HEK293 (cell line): ENCODE measurements at regions of chrX and their contacts with region 1.

Region 1: GRCh38 chrX:72126539-72127140 is 5.1 kb downstream of the RTL5 start:
- H3K4me3 ChIP-seq: no peak overlapping the region
- H3K27ac ChIP-seq: no peak overlapping the region
- H3K4me1 ChIP-seq: peaks cover 6% of the 10 kb centered on the region; the same call in 1 of the 2 replicates
- CTCF ChIP-seq: peak; percentile 96

Region 2: DNA sequence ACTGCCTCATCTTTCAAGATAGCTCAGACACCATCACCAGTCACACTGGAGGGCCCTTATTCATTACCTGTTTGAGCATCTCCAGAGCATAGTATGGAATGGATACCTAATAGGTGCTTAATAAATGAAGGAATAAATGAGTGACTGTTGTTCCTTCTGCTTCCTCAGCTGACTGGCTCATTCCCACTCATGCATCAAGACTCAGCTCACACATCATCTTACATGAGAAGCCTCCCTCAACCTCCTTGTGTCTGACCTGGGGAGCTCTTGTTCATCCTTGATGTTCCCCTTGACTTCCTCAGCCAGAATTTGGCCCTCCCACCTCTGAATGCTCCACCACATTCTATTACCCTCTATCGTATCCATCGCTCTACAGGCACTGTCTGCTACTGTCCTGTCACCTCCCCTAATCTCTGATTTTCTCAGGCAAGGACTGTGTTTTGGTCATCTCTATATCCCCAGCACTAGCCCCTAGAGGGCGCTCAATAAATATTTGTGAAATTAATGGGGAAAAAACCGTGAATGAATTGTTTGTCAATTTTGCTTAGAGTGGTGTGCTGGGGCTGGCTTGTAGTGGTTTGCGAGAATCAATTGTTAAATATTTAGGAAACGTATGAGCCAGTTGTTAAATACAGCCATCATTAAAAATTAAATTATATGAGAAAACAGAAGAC is 127.7 kb before region 1 on chrX:
- CTCF ChIA-PET with region 1: interaction called, 74 read pairs
- POLR2A ChIA-PET with region 1: interaction called, 3 read pairs
- H3K4me3 ChIP-seq: no peak overlapping the region
- H3K27ac ChIP-seq: no peak overlapping the region
- H3K4me1 ChIP-seq: no peaks in the 10 kb centered on the region
- CTCF ChIP-seq: no peak

Region 3: GRCh38 chrX:72029483-72030411 is 96.9 kb before region 1 on chrX:
- CTCF ChIA-PET with region 1: interaction called, 16 read pairs
- POLR2A ChIA-PET with region 1: no interaction called
- H3K4me3 ChIP-seq: no peak overlapping the region
- H3K27ac ChIP-seq: no peak overlapping the region
- H3K4me1 ChIP-seq: no peaks in the 10 kb centered on the region
- CTCF ChIP-seq: no peak

Region 4: GRCh38 chrX:72107320-72107719 is 19.3 kb before region 1 on chrX:
- CTCF ChIA-PET with region 1: interaction called, 33 read pairs
- POLR2A ChIA-PET with region 1: no interaction called
- H3K4me3 ChIP-seq: no peak overlapping the region
- H3K27ac ChIP-seq: no peak overlapping the region
- H3K4me1 ChIP-seq: no peaks in the 10 kb centered on the region
- CTCF ChIP-seq: no peak

Region 5: GRCh38 chrX:72169008-72169728 is 42.5 kb after region 1 on chrX:
- CTCF ChIA-PET with region 1: no interaction called
- POLR2A ChIA-PET with region 1: no interaction called
- H3K4me3 ChIP-seq: no peak overlapping the region
- H3K27ac ChIP-seq: no peak overlapping the region
- H3K4me1 ChIP-seq: no peaks in the 10 kb centered on the region
- CTCF ChIP-seq: no peak

Region 6: DNA sequence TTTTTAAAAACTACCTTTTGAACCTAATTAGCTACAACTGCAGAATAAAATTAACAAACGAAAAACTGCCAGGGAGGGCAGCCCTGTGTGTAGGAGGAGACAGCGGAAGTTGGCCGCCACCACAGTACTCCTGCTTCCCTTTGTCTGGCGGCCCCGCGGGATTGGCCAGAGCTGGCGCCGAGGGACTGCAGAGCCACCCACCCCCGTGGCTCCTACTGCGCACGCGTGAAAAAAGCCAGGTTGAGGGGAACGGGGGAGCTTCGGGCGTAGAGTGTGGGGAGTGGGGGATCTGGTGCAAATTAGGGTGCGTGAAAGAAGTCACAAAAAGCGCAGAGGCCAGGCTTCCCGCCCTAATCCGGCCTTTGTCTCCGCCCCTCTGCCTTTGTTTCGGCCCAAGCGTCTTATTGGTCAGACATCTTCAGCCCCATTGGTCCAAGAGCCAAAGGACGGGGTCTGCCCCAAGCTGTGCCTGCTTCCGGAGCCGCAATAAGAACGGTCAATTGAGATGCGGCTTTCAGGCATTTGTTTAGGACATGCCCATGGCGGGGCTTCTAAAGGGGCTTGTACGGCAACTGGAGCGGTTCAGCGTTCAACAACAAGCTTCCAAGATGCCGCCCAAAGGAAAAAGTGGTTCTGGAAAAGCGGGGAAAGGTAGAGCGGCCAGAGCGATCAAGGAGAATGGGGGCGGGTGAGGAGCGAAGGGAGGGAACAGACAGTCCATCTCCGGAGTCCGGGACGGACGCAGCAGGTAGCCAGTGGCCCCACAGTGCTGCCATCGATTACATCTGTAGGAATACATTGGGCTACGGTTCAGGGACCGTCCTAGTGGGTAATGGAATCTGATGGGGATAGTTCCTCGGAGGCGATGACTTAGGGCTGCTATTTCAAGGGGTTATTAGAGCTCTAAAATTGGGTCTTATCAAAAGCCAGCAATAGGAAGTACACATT is 54.8 kb after region 1 on chrX and contains the start of gene PIN4:
- CTCF ChIA-PET with region 1: interaction called, 14 read pairs
- POLR2A ChIA-PET with region 1: interaction called, 22 read pairs
- H3K4me3 ChIP-seq: peak within 1 kb of the TSS; percentile 68
- H3K27ac ChIP-seq: peak within 1 kb of the TSS; percentile 85
- H3K4me1 ChIP-seq: peaks cover 5% of the 10 kb centered on the region; the same call in 1 of the 2 replicates
- CTCF ChIP-seq: no peak